K562 (cell line): ENCODE measurements at regions of chrX and their contacts with region 1.

Region 1: DNA sequence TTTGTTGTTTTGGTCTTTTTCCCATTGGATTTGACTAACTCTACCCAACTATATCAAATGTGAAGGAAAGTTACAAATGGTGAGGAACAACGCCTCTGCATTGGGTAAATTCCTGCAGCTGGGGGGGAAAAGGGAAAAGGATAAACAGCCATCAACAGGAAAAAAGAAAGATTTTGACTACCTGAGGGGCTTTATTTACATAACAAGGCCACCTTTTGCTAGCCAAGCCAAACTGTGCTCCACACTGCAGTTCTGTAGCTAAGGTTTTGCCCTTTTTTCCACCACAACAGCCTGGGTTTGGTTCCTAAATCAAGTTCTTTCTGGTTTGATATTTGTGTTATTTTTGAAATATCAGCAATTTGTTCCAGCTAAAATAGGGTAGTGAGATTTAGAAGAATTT is 40.8 kb downstream of the RHOXF2B start:
- DNase-seq: no peak
- ATAC-seq: no peak
- H3K4me3 ChIP-seq: no peak overlapping the region
- H3K27ac ChIP-seq: no peak overlapping the region
- H3K4me1 ChIP-seq: no peaks in the 10 kb centered on the region; a peak in 1 of 5 replicates
- H3K27me3 ChIP-seq: no peaks in the 10 kb centered on the region; a peak in 1 of 5 replicates
- CTCF ChIP-seq: no peak
- EP300 ChIP-seq: no peak
- POLR2A ChIP-seq: no peak
- RAD21 ChIP-seq: no peak

Region 2: GRCh38 chrX:119636419-119636818 is 400.3 kb before region 1 on chrX:
- CTCF ChIA-PET with region 1: no interaction called
- POLR2A ChIA-PET with region 1: no interaction called
- in situ Hi-C with region 1: no loop called
- intact Hi-C with region 1: no loop called
- DNase-seq: no peak
- ATAC-seq: no peak
- H3K4me3 ChIP-seq: no peak overlapping the region
- H3K27ac ChIP-seq: no peak overlapping the region
- H3K4me1 ChIP-seq: no peaks in the 10 kb centered on the region
- H3K27me3 ChIP-seq: no peaks in the 10 kb centered on the region
- CTCF ChIP-seq: no peak
- EP300 ChIP-seq: no peak
- POLR2A ChIP-seq: no peak
- RAD21 ChIP-seq: no peak

Region 3: GRCh38 chrX:120200851-120201250 is 164.1 kb after region 1 on chrX:
- CTCF ChIA-PET with region 1: no interaction called
- POLR2A ChIA-PET with region 1: no interaction called
- in situ Hi-C with region 1: loop called (anchors 10 kb)
- intact Hi-C with region 1: no loop called
- DNase-seq: no peak
- ATAC-seq: no peak
- H3K4me3 ChIP-seq: no peak overlapping the region
- H3K27ac ChIP-seq: no peak overlapping the region
- H3K4me1 ChIP-seq: no peaks in the 10 kb centered on the region; a peak in 2 of 5 replicates
- H3K27me3 ChIP-seq: no peaks in the 10 kb centered on the region; a peak in 1 of 5 replicates
- CTCF ChIP-seq: no peak
- EP300 ChIP-seq: no peak
- POLR2A ChIP-seq: no peak
- RAD21 ChIP-seq: no peak

Region 4: GRCh38 chrX:120213436-120214265 is 176.9 kb after region 1 on chrX:
- CTCF ChIA-PET with region 1: no interaction called
- POLR2A ChIA-PET with region 1: no interaction called
- in situ Hi-C with region 1: no loop called
- intact Hi-C with region 1: loop called (anchors 10 kb)
- DNase-seq: peak; percentile 46 to 72 (median 57)
- ATAC-seq: peak; percentile 97
- H3K4me3 ChIP-seq: no peak overlapping the region
- H3K27ac ChIP-seq: no peak overlapping the region
- H3K4me1 ChIP-seq: no peaks in the 10 kb centered on the region; a peak in 1 of 5 replicates
- H3K27me3 ChIP-seq: no peaks in the 10 kb centered on the region
- CTCF ChIP-seq: peak; percentile 75 to 95 (median 84)
- EP300 ChIP-seq: no peak
- POLR2A ChIP-seq: no peak
- RAD21 ChIP-seq: peak; percentile 62 to 67